ENCODE measurements at regions of chr4 and their contacts with region 1.

Region 1: GRCh38 chr4:99949034-99949998 is 759 bp downstream of the H2AZ1 start:
- DNase-seq: peak; percentile 74
- CTCF ChIP-seq: peak; percentile 80

Region 2: GRCh38 chr4:99894161-99894997 is 54.9 kb before region 1 on chr4 and contains the start of gene LAMTOR3:
- CTCF ChIA-PET with region 1: interaction called, 6 read pairs
- POLR2A ChIA-PET with region 1: interaction called, 15 read pairs
- DNase-seq: peak; percentile 94
- CTCF ChIP-seq: no peak

Region 3: GRCh38 chr4:99938243-99938753 is 11.0 kb before region 1 on chr4:
- CTCF ChIA-PET with region 1: interaction called, 17 read pairs
- POLR2A ChIA-PET with region 1: no interaction called
- DNase-seq: no peak
- CTCF ChIP-seq: no peak

Region 4: GRCh38 chr4:99960648-99961047 is 11.3 kb after region 1 on chr4:
- CTCF ChIA-PET with region 1: interaction called, 11 read pairs
- POLR2A ChIA-PET with region 1: interaction called, 3 read pairs
- DNase-seq: no peak
- CTCF ChIP-seq: no peak

Region 5: DNA sequence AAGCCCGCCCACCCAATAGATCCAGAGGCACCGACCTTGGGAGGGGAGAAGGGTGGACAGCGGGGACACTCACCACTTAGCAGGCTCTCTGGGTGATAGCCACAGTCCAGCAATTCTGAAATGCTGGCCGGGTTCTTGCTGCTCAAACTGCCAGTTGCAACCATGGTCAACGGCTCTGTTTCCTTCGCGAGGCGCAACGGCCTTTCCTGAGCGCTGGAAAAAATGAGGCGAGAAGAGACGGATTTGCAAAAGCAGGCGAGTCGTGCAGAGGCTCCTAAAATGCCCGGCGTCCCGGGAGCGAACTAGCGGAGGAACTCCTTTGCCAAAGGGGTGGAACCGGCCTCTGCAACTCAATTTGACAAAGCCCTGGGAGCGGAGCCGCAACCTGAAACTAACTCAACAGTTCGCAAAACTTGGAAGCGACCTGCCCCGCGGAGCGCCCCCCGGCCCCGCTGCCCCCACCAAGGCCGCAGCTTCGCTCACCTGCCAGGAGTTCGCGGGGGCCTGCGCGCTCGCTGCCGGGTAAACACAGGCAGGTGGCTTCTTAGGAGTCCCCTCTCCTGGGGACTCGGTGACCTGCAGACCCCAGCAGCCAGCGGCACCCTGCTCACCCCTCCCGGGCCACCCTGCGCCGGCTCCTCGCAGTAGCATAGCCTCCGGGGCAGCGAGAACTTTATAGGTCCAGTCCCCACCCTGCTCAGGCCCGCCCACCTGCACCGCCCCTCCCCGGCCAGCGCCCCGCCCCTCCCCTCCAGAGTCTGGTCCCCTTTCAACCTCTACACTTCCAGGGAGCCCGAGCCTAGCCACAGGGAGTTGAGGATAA is 240.7 kb after region 1 on chr4 and contains the start of gene DDIT4L:
- CTCF ChIA-PET with region 1: no interaction called
- POLR2A ChIA-PET with region 1: no interaction called
- DNase-seq: peak; percentile 20
- CTCF ChIP-seq: no peak

Region 6: GRCh38 chr4:100288161-100288560 is 338.8 kb after region 1 on chr4:
- CTCF ChIA-PET with region 1: no interaction called
- POLR2A ChIA-PET with region 1: no interaction called
- DNase-seq: no peak
- CTCF ChIP-seq: no peak

Measured in GM10248 (cell line).